Heart left ventricle (tissue), 16 donors: ENCODE measurements at regions of chr22 and their contacts with region 1.

Region 1: GRCh38 chr22:41648432-41648831 is 27.3 kb downstream of the XRCC6 start:
- DNase-seq: no peak
- ATAC-seq: no peak
- H3K4me3 ChIP-seq: no peak overlapping the region
- H3K27ac ChIP-seq: no peak overlapping the region
- H3K4me1 ChIP-seq: peaks cover 0 to 10% (median 0%) of the 10 kb centered on the region in 12 donors
- H3K27me3 ChIP-seq: no peaks in the 10 kb centered on the region
- CTCF ChIP-seq: no peak
- POLR2A ChIP-seq: no peak

Region 2: GRCh38 chr22:41320416-41321240 is 327.8 kb before region 1 on chr22:
- intact Hi-C with region 1: no loop called
- DNase-seq: no peak
- ATAC-seq: no peak
- H3K4me3 ChIP-seq: no peak overlapping the region
- H3K27ac ChIP-seq: no peak overlapping the region
- H3K4me1 ChIP-seq: peaks cover 0 to 7% (median 0%) of the 10 kb centered on the region in 12 donors
- H3K27me3 ChIP-seq: no peaks in the 10 kb centered on the region
- CTCF ChIP-seq: no peak
- POLR2A ChIP-seq: no peak

Region 3: GRCh38 chr22:41625577-41625976 is 22.9 kb before region 1 on chr22:
- intact Hi-C with region 1: loop called in 1 of 10 experiments (anchors 2 kb)
- DNase-seq: no peak
- ATAC-seq: no peak
- H3K4me3 ChIP-seq: no peak overlapping the region
- H3K27ac ChIP-seq: no peak overlapping the region
- H3K4me1 ChIP-seq: peaks cover 0 to 27% (median 15%) of the 10 kb centered on the region in 12 donors
- H3K27me3 ChIP-seq: no peaks in the 10 kb centered on the region
- CTCF ChIP-seq: no peak
- POLR2A ChIP-seq: no peak

Region 4: DNA sequence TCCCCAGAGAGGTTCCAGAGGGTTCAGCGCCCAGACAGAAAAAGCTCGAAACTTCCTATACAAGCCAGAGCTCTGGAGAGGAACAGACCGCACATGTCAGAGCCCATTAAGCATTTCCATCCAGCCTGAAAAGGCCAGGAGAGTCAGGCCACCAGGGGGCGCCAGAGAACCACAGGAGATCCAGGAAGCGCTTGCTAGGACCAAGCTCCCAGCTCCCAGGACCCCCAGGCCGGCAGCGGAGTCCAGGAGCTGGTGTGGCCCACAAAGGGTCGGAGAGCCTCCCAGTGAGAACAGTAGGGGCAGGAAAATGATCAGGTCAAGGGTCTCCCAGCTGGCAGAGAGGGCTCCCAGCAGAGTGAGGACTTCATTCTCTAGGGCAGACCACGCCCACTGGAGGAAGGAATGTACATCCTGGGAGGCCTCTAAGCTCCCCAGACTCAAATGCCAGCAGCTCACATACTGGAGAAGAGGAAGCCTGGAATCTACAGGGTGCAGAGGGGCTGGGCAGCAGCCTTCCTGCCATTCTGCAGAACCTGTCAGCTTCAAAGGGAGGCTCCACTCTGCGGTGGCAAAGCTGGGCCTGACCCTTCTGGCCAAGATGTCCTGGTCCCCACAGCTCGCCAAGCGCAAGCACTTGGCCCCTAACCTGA is 48.8 kb after region 1 on chr22:
- intact Hi-C with region 1: no loop called
- DNase-seq: peak; percentile 90 to 96 (median 92)
- ATAC-seq: peak; percentile 53 to 90 (median 82)
- H3K4me3 ChIP-seq: peak overlapping the region in 7 of 12 donors; percentile 30 to 43 (median 37)
- H3K27ac ChIP-seq: peak overlapping the region in 10 of 12 donors; percentile 39 to 70 (median 56)
- H3K4me1 ChIP-seq: peaks cover 0 to 20% (median 14%) of the 10 kb centered on the region in 12 donors
- H3K27me3 ChIP-seq: no peaks in the 10 kb centered on the region
- CTCF ChIP-seq: peak; percentile 94 to 99 (median 99)
- POLR2A ChIP-seq: no peak